ENCODE measurements at regions of chr17 and their contacts with region 1.

Region 1: GRCh38 chr17:74748529-74749365 is at the start of gene NHERF1:
- DNase-seq: peak; percentile 45 to 98 (median 91)
- ATAC-seq: peak; percentile 95
- H3K4me3 ChIP-seq: peak within 1 kb of the TSS; percentile 95
- H3K4me3 Mint-ChIP-seq: peak within 1 kb of the TSS; percentile 96 to 100 (median 98)
- H3K27ac ChIP-seq: peak within 1 kb of the TSS; percentile 90
- H3K27ac Mint-ChIP-seq: peak within 1 kb of the TSS; percentile 80 to 97 (median 93)
- H3K4me1 ChIP-seq: peaks cover 54 to 59% of the 10 kb centered on the region in 2 donors
- H3K4me1 Mint-ChIP-seq: peaks cover 54 to 68% (median 62%) of the 10 kb centered on the region in 7 donors
- H3K27me3 ChIP-seq: no peaks in the 10 kb centered on the region
- H3K27me3 Mint-ChIP-seq: no peaks in the 10 kb centered on the region
- total RNA-seq, gene NHERF1: 93.1 to 279 (median 156) TPM

Region 2: GRCh38 chr17:73231841-73232586 is 1516.7 kb before region 1 on chr17:
- CTCF ChIA-PET with region 1: no interaction called
- POLR2A ChIA-PET with region 1: no interaction called
- intact Hi-C with region 1: loop called in 1 of 2 experiments (anchors 5 kb)
- DNase-seq: peak; percentile 93 to 99 (median 96)
- ATAC-seq: peak; percentile 98
- H3K4me3 ChIP-seq: peak overlapping the region; percentile 87
- H3K4me3 Mint-ChIP-seq: peak overlapping the region; percentile 90 to 98 (median 95)
- H3K27ac ChIP-seq: peak overlapping the region; percentile 86
- H3K27ac Mint-ChIP-seq: peak overlapping the region; percentile 92 to 98 (median 96)
- H3K4me1 ChIP-seq: peaks cover 20 to 32% of the 10 kb centered on the region in 2 donors
- H3K4me1 Mint-ChIP-seq: peaks cover 52 to 81% (median 70%) of the 10 kb centered on the region in 7 donors
- H3K27me3 ChIP-seq: no peaks in the 10 kb centered on the region
- H3K27me3 Mint-ChIP-seq: no peaks in the 10 kb centered on the region

Region 3: DNA sequence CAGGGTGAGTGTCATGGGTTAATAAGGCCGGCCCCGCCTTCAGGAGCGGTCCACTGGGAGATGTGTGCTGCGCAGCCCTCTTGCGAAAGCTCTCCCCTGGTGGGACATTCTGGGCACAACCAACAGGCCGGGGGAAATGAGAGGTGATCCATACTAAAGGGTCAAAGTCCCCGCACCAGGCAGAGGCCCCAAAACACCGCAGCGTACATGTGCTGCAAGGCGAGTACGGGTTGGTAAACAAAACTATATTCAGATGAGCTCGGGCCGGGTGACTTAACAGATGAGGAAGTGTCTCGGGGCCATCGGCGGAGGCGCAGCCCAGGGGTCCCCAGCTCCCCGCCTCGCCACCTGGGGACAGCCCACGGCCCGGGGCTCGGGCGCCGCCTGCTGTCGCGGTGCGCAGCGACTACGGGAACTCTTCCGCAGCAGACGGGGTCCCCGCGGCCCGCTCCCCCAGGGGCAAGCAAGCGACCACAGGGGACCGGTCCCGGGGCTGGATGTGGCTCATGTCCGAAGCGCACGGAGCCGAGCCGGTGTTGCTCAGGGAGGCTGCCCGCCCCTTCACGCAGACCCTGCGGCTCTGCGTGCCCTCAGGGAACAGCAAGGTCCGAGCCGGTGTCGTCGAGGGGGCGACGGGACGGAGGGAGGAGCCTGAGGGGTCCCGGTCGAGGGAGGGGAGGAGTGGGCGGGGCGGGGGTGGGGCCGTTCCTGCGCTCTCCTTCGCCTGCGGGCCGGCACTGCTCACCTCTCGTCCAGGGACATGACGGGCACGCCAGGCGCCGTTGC is 12.0 kb before region 1 on chr17 and contains the start of gene RAB37:
- CTCF ChIA-PET with region 1: interaction called, 32 read pairs
- POLR2A ChIA-PET with region 1: interaction called, 54 read pairs
- intact Hi-C with region 1: loop called in 1 of 2 experiments (anchors 1 kb)
- DNase-seq: peak in 7 of 9 donors; percentile 35 to 59 (median 46)
- ATAC-seq: peak; percentile 66
- H3K4me3 ChIP-seq: peak within 1 kb of the TSS; percentile 95
- H3K4me3 Mint-ChIP-seq: peak within 1 kb of the TSS; percentile 85 to 97 (median 92)
- H3K27ac ChIP-seq: peak within 1 kb of the TSS; percentile 71
- H3K27ac Mint-ChIP-seq: peak within 1 kb of the TSS; percentile 79 to 99 (median 93)
- H3K4me1 ChIP-seq: peaks cover 39 to 40% of the 10 kb centered on the region in 2 donors
- H3K4me1 Mint-ChIP-seq: peaks cover 43 to 55% (median 52%) of the 10 kb centered on the region in 7 donors
- H3K27me3 ChIP-seq: no peaks in the 10 kb centered on the region
- H3K27me3 Mint-ChIP-seq: peaks cover 0 to 17% (median 0%) of the 10 kb centered on the region in 5 donors
- total RNA-seq, gene RAB37: 23.6 to 58.5 (median 34.4) TPM

Region 4: DNA sequence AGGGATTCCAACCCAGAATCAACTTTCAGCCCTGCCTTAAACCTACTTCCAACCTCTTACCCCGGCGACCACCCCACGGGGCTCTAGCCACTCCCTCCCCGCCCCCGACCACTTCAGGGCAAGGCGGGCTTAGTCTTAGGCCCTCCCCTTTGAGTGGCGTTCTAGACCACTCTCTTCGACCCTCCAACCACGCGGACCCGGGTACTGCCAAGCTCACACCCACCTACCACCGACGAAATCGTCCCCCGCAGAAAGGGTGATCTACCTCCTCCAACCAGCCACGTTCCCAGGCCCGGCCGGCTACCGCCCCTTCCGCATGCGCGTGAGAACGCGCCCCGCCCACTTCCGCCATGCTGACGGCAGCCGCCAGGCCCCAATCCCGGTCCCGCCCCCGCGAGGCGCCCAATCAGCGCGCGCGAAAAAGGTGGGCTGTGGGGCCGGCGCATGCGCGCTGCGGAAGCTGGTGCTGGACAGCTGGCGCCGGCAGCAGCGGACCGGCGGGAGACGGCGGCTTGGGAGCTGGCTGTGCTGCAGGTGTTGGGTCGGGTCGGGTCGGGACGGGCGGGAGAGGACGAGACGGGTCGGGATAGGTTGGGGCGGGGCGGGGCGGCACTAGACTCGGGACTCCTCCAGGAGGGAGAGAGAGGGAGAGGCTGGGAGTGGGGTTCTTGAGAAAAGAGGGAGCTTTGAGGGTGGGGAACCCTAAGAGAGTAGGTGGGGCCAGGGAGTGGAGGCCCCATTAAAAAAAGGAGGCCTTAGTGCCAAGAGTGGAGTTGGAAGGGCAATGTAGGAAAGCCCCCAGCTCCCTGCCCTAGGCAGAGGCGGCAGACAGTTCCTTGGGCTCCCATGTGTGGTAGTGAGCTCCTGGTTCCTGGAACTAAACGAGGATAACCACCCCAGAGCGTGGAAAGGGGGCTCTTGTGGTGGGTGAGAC is 27.6 kb after region 1 on chr17 and contains the start of gene NAT9:
- CTCF ChIA-PET with region 1: interaction called, 165 read pairs
- POLR2A ChIA-PET with region 1: interaction called, 372 read pairs
- intact Hi-C with region 1: loop called (anchors 1 kb)
- DNase-seq: peak; percentile 95 to 100 (median 98)
- ATAC-seq: peak; percentile 86
- H3K4me3 ChIP-seq: peak within 1 kb of the TSS; percentile 91
- H3K4me3 Mint-ChIP-seq: peak within 1 kb of the TSS; percentile 96 to 100 (median 98)
- H3K27ac ChIP-seq: peak within 1 kb of the TSS; percentile 78
- H3K27ac Mint-ChIP-seq: peak within 1 kb of the TSS; percentile 91 to 99 (median 96)
- H3K4me1 ChIP-seq: peaks cover 49 to 51% of the 10 kb centered on the region in 2 donors
- H3K4me1 Mint-ChIP-seq: peaks cover 32 to 76% (median 66%) of the 10 kb centered on the region in 7 donors
- H3K27me3 ChIP-seq: no peaks in the 10 kb centered on the region
- H3K27me3 Mint-ChIP-seq: no peaks in the 10 kb centered on the region
- total RNA-seq, gene NAT9: 41.4 to 78.8 (median 56.9) TPM

Region 5: DNA sequence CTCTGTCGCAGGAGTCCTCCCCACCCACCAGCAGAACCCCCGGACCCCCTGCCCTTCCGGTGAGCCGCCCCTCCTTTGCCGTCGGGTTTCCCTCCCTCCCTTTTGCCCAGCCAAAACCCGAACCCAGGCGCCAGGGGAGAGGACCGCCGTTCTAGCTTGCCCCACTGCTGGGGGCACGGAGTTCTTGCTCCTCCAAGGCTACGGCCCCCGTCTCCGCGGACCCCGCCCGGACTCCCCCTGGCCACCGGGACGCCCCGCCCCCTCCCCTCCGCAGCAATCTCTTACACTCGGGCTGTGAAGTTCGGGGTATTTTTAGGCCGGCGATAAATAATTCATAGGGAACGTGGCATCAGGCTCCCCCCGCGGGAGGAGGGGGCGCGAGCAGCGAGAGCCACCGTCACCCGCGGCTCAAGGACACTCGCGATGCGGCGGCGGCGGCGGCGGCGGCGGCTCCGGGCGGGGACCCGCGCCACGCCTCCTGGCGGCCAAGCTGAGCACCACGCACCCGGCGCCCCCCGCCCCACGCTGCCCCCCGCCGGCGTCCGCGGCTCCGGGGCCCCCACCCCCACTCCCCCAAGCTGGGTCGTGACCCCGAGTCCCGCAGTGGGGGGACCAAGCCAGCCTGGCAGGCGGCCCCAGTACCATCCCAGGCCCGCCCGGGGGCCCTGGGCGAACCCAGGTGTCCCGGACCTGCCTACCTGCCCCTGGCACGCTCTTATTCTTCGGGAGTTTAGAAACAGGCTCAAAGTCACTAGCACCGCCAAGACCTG is 110.9 kb after region 1 on chr17 and contains the start of gene GRIN2C:
- CTCF ChIA-PET with region 1: interaction called, 8 read pairs
- POLR2A ChIA-PET with region 1: interaction called, 4 read pairs
- intact Hi-C with region 1: loop called (anchors 1 kb)
- DNase-seq: peak in 8 of 9 donors; percentile 15 to 52 (median 42)
- ATAC-seq: peak; percentile 60
- H3K4me3 ChIP-seq: peak within 1 kb of the TSS; percentile 27
- H3K4me3 Mint-ChIP-seq: peak within 1 kb of the TSS; percentile 54 to 78 (median 68)
- H3K27ac ChIP-seq: no peak within 1 kb of the TSS
- H3K27ac Mint-ChIP-seq: peak within 1 kb of the TSS in 1 of 9 donors; percentile 65
- H3K4me1 ChIP-seq: peaks cover 12 to 15% of the 10 kb centered on the region in 2 donors
- H3K4me1 Mint-ChIP-seq: peaks cover 0 to 16% (median 12%) of the 10 kb centered on the region in 7 donors
- H3K27me3 ChIP-seq: peaks cover 8 to 17% of the 10 kb centered on the region in 2 donors
- H3K27me3 Mint-ChIP-seq: peaks cover 40 to 70% (median 56%) of the 10 kb centered on the region in 5 donors
- total RNA-seq, gene GRIN2C: 0.12 to 0.15 TPM in 2 of 5 experiments, not detected in the others

Region 6: GRCh38 chr17:75034236-75034908 is 285.6 kb after region 1 on chr17:
- CTCF ChIA-PET with region 1: no interaction called
- POLR2A ChIA-PET with region 1: interaction called, 4 read pairs
- intact Hi-C with region 1: loop called in 1 of 2 experiments (anchors 1 kb)
- DNase-seq: peak; percentile 63 to 95 (median 77)
- ATAC-seq: peak; percentile 37
- H3K4me3 ChIP-seq: peak overlapping the region; percentile 72
- H3K4me3 Mint-ChIP-seq: peak overlapping the region; percentile 85 to 97 (median 94)
- H3K27ac ChIP-seq: peak overlapping the region; percentile 77
- H3K27ac Mint-ChIP-seq: peak overlapping the region; percentile 95 to 100 (median 99)
- H3K4me1 ChIP-seq: peaks cover 36 to 40% of the 10 kb centered on the region in 2 donors
- H3K4me1 Mint-ChIP-seq: peaks cover 26 to 73% (median 58%) of the 10 kb centered on the region in 7 donors
- H3K27me3 ChIP-seq: no peaks in the 10 kb centered on the region
- H3K27me3 Mint-ChIP-seq: peaks cover 0 to 10% (median 0%) of the 10 kb centered on the region in 5 donors